Natural killer cell (primary cell): ENCODE measurements at regions of chr16 and their contacts with region 1.

Region 1: DNA sequence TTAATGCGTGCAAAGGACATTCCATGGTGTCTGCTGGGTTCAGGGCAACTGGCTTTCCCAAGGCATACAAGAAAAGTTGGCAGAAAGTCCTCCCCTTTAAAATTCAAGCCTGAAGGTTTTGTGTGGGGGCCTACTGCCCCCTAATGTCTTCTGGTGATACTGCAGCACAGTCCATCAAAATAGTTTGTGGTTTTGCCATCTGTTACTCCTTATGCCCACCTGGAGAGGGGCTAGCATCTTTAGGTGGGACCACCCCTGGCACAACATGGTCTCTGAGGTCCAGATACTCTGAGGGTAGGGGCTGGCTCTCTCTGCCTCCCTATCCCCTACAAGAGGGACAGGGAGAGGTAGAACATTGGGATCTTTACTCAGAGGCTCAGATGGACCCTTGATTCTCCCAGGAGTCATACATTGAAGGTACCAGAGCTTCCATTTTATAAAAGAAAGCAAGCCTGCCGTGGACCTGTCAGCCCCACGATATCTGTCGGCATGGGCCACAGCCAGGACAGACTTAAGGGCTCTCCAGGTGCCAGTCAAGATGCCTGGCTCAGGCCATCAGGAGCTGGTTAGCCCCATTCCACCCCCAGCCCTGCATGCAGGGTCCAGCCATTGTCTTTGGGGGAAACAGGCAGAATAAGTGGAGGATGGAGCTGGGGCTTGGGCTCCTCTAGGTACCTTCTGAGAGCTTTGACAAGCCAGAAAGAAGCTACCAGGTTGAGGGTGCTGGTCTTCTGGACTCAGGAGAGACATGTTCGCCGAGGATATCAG is 6.3 kb downstream of the ESRP2 start:
- DNase-seq: peak; percentile 42 to 75
- ATAC-seq: peak; percentile 51 to 88 (median 66)
- H3K4me3 ChIP-seq: no peak overlapping the region
- H3K4me3 Mint-ChIP-seq: no peak overlapping the region
- H3K27ac ChIP-seq: no peak overlapping the region
- H3K27ac Mint-ChIP-seq: peak overlapping the region; percentile 34 to 69
- H3K4me1 ChIP-seq: peaks cover 9% of the 10 kb centered on the region
- H3K4me1 Mint-ChIP-seq: peaks cover 18 to 30% of the 10 kb centered on the region in 2 donors
- H3K27me3 ChIP-seq: no peaks in the 10 kb centered on the region
- H3K27me3 Mint-ChIP-seq: no peaks in the 10 kb centered on the region
- CTCF ChIP-seq: peak; percentile 93

Region 2: DNA sequence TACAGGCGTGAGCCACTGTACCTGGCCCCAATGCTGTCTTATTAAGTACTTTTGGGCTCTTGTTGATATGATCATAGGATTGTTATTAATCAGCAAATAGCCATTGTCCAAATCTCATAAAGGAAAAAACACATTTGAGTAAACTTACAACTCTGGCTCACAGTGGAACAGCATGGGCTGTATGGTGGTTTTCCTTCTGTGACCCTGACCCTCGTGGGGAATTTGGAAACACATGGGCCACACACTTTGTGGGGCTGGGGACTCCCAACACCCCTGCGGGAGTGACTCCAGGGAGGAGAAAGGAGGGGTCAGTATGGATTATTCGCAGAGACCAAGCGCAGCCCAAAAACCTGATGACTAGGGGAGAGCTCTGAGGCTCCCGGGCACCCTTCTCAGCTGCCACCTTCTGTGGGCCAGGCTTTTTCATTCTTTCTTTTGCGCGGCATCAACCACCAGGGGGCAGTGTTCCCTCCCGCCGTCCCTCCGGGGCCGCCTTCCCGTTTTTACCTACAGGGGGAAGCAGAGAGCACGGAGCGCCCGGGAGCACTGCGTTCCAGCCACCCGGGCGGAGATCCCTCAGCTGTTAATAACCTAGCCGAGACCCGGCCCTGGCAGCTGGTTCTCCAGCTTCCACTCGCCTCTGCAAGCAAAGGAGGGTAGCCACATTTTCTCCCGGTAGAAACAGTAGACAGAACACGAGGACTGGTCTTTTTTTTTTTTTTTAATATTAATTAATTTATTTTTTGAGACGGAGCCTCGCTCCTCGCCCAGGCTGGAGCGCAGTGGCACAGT is 413.2 kb before region 1 on chr16:
- intact Hi-C with region 1: loop called (anchors 1 kb)
- DNase-seq: peak; percentile 91 to 94
- ATAC-seq: peak; percentile 99
- H3K4me3 ChIP-seq: no peak overlapping the region
- H3K4me3 Mint-ChIP-seq: no peak overlapping the region
- H3K27ac ChIP-seq: no peak overlapping the region
- H3K27ac Mint-ChIP-seq: peak overlapping the region; percentile 31 to 45
- H3K4me1 ChIP-seq: peaks cover 8% of the 10 kb centered on the region
- H3K4me1 Mint-ChIP-seq: peaks cover 0 to 7% of the 10 kb centered on the region in 2 donors
- H3K27me3 ChIP-seq: no peaks in the 10 kb centered on the region
- H3K27me3 Mint-ChIP-seq: no peaks in the 10 kb centered on the region
- CTCF ChIP-seq: peak; percentile 100

Region 3: DNA sequence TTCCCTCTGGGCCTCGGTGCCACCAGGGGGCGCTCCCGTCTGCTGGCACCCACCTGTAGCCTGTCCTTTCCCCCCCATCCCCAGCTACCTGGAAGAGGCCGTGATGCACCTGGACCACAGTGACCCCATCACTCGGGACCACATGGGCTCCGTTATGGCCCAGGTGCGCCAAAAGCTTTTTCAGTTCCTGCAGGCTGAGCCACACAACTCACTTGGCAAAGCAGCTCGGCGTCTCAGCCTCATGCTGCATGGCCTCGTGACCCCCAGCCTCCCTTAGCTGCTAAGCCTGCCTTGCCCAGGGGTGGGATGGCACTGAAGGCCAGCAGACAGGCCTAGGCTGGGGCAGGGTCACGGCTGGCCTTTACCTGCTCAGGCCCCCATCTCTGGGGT is 345.7 kb before region 1 on chr16:
- intact Hi-C with region 1: loop called (anchors 1 kb)
- DNase-seq: peak; percentile 72 to 85
- ATAC-seq: peak; percentile 59 to 90 (median 87)
- H3K4me3 ChIP-seq: no peak overlapping the region
- H3K4me3 Mint-ChIP-seq: no peak overlapping the region
- H3K27ac ChIP-seq: no peak overlapping the region
- H3K27ac Mint-ChIP-seq: peak overlapping the region in 1 of 2 donors; percentile 58
- H3K4me1 ChIP-seq: no peaks in the 10 kb centered on the region
- H3K4me1 Mint-ChIP-seq: peaks cover 0 to 4% of the 10 kb centered on the region in 2 donors
- H3K27me3 ChIP-seq: no peaks in the 10 kb centered on the region
- H3K27me3 Mint-ChIP-seq: no peaks in the 10 kb centered on the region
- CTCF ChIP-seq: peak; percentile 81

Region 4: DNA sequence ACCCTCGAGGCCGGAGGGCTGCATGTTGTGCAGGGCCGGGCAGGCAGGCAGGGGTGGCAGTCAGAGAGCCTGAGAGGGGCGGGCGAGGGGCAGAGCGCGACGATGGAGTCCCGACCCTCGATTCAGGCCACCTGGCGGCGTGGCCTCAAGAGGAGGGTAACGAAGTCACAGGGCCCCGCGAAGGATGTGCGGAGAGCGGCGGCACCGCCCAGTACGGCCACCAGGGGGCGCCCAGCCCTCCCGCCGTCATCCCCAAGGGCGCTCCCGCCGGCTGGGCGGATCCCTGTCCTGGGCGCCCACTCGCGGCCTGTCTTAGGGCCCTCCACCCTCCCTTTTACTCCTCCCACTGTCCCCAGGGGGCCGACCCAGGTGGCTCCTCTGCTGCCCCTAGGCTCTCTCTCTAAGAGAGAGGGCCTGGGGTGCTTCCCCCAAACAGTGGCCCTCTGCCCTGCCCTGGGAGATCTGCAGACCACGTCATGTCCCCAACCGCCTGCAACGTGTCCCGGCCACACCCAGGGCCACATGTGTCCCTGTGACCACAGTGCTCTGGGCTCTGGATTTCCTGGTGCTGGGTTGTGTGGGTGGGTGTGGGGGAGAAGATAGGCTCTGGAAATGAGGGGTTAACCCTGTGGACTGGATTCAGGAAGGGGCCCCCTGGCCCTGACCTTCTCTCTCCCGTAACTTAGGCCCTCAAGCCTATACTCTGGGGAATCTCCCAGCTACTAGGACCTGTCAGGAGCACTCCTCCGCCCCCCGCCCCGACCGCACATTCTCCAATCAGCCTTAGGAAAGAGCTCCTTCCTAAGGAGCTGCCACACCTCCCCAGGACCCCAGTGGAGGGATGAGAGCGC is 236.2 kb before region 1 on chr16:
- intact Hi-C with region 1: loop called (anchors 1 kb)
- DNase-seq: peak; percentile 85 to 91
- ATAC-seq: peak; percentile 88 to 95 (median 90)
- H3K4me3 ChIP-seq: peak overlapping the region; percentile 32
- H3K4me3 Mint-ChIP-seq: peak overlapping the region; percentile 83
- H3K27ac ChIP-seq: peak overlapping the region; percentile 89
- H3K27ac Mint-ChIP-seq: peak overlapping the region; percentile 89 to 95
- H3K4me1 ChIP-seq: peaks cover 75% of the 10 kb centered on the region
- H3K4me1 Mint-ChIP-seq: peaks cover 24 to 53% of the 10 kb centered on the region in 2 donors
- H3K27me3 ChIP-seq: no peaks in the 10 kb centered on the region
- H3K27me3 Mint-ChIP-seq: no peaks in the 10 kb centered on the region
- CTCF ChIP-seq: peak; percentile 92

Region 5: DNA sequence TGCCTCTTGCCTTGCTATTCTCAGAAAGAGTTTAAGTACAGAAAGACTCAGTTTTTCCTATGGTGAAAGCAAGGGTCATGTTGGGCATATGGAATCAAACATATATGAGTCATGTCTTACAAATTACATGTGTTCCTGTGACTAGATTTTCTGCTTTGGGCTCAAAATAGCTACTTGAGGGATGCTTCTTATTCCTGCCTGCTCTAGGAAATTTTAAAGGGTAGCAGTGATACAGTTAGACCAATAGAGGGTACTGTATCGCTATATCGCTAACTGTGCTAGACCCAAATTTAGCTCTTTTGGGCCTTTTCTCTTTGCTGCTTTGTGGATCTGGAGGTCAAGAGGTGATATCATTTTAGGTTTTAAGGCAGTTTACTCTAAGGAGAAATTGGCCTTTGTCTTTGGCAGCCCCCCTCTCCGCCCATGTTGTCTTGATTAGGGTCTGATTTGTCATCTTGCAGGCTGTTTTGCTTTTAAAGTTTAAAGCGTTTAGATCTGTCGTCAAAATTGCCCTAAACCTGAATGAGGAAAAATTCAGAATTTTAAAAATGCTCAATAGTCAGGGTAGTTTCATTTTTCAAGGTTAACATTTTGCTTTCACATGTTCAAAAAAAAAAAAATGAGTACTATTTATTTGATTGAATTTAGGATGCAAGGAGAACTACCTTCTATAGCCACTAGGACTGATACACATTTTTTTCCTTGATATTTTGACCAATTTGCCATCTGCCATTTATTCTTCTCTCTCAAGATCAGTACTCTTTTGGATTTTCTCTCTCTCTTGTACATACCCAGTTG is 135.6 kb before region 1 on chr16:
- intact Hi-C with region 1: loop called (anchors 1 kb)
- DNase-seq: peak in 1 of 2 donors; percentile 64
- ATAC-seq: peak; percentile 78 to 85 (median 85)
- H3K4me3 ChIP-seq: no peak overlapping the region
- H3K4me3 Mint-ChIP-seq: peak overlapping the region; percentile 47
- H3K27ac ChIP-seq: peak overlapping the region; percentile 58
- H3K27ac Mint-ChIP-seq: peak overlapping the region; percentile 66 to 89
- H3K4me1 ChIP-seq: peaks cover 31% of the 10 kb centered on the region
- H3K4me1 Mint-ChIP-seq: peaks cover 82 to 84% of the 10 kb centered on the region in 2 donors
- H3K27me3 ChIP-seq: no peaks in the 10 kb centered on the region
- H3K27me3 Mint-ChIP-seq: no peaks in the 10 kb centered on the region
- CTCF ChIP-seq: peak; percentile 61

Region 6: GRCh38 chr16:68206245-68206644 is 23.4 kb before region 1 on chr16:
- intact Hi-C with region 1: no loop called
- DNase-seq: no peak
- ATAC-seq: no peak
- H3K4me3 ChIP-seq: no peak overlapping the region
- H3K4me3 Mint-ChIP-seq: no peak overlapping the region
- H3K27ac ChIP-seq: no peak overlapping the region
- H3K27ac Mint-ChIP-seq: peak overlapping the region; percentile 51 to 75
- H3K4me1 ChIP-seq: peaks cover 3% of the 10 kb centered on the region
- H3K4me1 Mint-ChIP-seq: peaks cover 22 to 24% of the 10 kb centered on the region in 2 donors
- H3K27me3 ChIP-seq: no peaks in the 10 kb centered on the region
- H3K27me3 Mint-ChIP-seq: no peaks in the 10 kb centered on the region
- CTCF ChIP-seq: no peak